Activated CD4-positive, alpha-beta memory T cell treated with anti-CD3 and anti-CD28 coated beads for 36 hours (primary cell): ENCODE measurements at regions of chr2 and their contacts with region 1.

Region 1: DNA sequence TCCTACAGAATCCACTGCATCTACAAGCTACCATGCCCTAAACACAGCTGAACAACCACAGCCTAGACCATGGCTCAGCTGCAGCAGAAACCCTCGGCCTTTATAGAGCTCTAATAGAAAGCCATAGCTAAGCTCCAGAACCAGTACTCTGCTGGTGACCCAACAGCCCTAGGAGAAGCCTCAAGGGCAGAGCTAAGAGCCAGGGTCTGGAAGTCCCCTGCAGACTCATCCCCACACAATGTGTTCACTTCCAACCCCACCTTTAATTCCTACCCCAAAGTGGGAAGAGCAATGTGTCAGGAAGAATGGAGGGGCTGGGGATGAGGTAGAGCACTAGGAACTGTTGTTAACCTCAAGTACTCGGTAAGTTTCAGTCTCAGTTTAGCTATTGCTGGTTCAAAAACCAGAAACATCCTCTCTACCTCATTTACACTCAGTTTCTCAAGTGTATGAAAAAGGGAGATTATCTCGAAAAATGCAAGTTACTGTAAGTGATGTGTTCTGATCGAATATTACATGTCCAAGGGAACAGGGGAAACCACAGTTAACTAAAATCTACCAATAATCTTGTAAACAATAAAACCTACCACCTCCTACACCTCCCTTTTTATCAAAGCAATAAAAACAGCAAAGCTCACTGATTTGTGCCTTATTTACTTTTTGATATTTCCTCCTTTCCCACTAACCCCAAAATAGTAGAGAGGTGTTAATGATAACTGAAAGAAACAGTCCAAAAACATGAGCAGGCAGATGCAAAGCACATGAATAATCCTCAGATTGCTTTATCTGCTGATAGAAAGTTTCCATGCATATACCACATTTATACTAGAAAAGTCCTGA is 36.2 kb downstream of the THADA start:
- DNase-seq: peak; percentile 38
- H3K4me3 Mint-ChIP-seq: peak overlapping the region; percentile 28
- H3K27ac Mint-ChIP-seq: peak overlapping the region; percentile 85
- H3K4me1 Mint-ChIP-seq: peaks cover 52% of the 10 kb centered on the region
- H3K27me3 Mint-ChIP-seq: no peaks in the 10 kb centered on the region

Region 2: GRCh38 chr2:43387092-43388062 is 172.2 kb before region 1 on chr2:
- CTCF ChIA-PET with region 1: no interaction called
- POLR2A ChIA-PET with region 1: no interaction called
- intact Hi-C with region 1: loop called (anchors 10 kb)
- DNase-seq: peak; percentile 20
- H3K4me3 Mint-ChIP-seq: no peak overlapping the region
- H3K27ac Mint-ChIP-seq: peak overlapping the region; percentile 28
- H3K4me1 Mint-ChIP-seq: peaks cover 31% of the 10 kb centered on the region
- H3K27me3 Mint-ChIP-seq: no peaks in the 10 kb centered on the region

Region 3: GRCh38 chr2:43519643-43520221 is 39.9 kb before region 1 on chr2:
- CTCF ChIA-PET with region 1: no interaction called
- POLR2A ChIA-PET with region 1: no interaction called
- intact Hi-C with region 1: loop called (anchors 10 kb)
- DNase-seq: no peak
- H3K4me3 Mint-ChIP-seq: no peak overlapping the region
- H3K27ac Mint-ChIP-seq: peak overlapping the region; percentile 52
- H3K4me1 Mint-ChIP-seq: peaks cover 45% of the 10 kb centered on the region
- H3K27me3 Mint-ChIP-seq: no peaks in the 10 kb centered on the region

Region 4: DNA sequence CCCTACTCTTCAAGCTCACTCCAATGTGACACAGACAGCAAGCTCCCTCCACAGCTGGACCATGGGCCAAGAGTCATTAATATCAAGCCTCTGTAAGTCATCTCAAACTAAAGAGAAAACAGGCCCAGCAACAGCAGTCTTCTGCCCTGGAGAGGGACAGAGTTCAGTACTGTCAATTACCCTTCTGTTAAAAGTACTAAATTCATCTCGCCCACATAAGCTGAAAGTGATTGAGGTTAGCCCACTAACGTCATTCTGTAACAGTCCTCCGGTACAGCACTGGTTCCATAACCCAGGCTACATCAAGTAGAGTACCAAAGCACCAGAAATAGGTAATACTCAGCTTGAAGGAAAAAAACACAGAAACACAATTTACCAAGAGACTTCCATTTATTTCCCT is 10.3 kb after region 1 on chr2:
- CTCF ChIA-PET with region 1: interaction called, 15 read pairs
- POLR2A ChIA-PET with region 1: interaction called, 36 read pairs
- intact Hi-C with region 1: loop called (anchors 1 kb)
- DNase-seq: peak; percentile 58
- H3K4me3 Mint-ChIP-seq: peak overlapping the region; percentile 58
- H3K27ac Mint-ChIP-seq: peak overlapping the region; percentile 92
- H3K4me1 Mint-ChIP-seq: peaks cover 73% of the 10 kb centered on the region
- H3K27me3 Mint-ChIP-seq: no peaks in the 10 kb centered on the region

Region 5: GRCh38 chr2:43576981-43577892 is 17.6 kb after region 1 on chr2:
- CTCF ChIA-PET with region 1: interaction called, 67 read pairs
- POLR2A ChIA-PET with region 1: interaction called, 3 read pairs
- intact Hi-C with region 1: no loop called
- DNase-seq: no peak
- H3K4me3 Mint-ChIP-seq: no peak overlapping the region
- H3K27ac Mint-ChIP-seq: no peak overlapping the region
- H3K4me1 Mint-ChIP-seq: peaks cover 41% of the 10 kb centered on the region
- H3K27me3 Mint-ChIP-seq: no peaks in the 10 kb centered on the region